Activated CD4-positive, alpha-beta T cell treated with anti-CD3 and anti-CD28 coated beads, Interleukin-2, amount 10 ng/mL, durations not matched to agents 24 days and 14 days (primary cell): ENCODE measurements at regions of chr2 and their contacts with region 1.

Region 1: GRCh38 chr2:160406591-160407392 is 86.8 kb downstream of the RBMS1 start:
- DNase-seq: peak; percentile 92
- H3K4me3 Mint-ChIP-seq: peak overlapping the region; percentile 98
- H3K27ac Mint-ChIP-seq: peak overlapping the region; percentile 89
- H3K4me1 Mint-ChIP-seq: peaks cover 69% of the 10 kb centered on the region
- H3K27me3 Mint-ChIP-seq: peaks cover 4% of the 10 kb centered on the region

Region 2: GRCh38 chr2:160224060-160224459 is 182.7 kb before region 1 on chr2:
- intact Hi-C with region 1: loop called (anchors 5 kb)
- DNase-seq: peak; percentile 73
- H3K4me3 Mint-ChIP-seq: peak overlapping the region; percentile 31
- H3K27ac Mint-ChIP-seq: peak overlapping the region; percentile 67
- H3K4me1 Mint-ChIP-seq: peaks cover 44% of the 10 kb centered on the region
- H3K27me3 Mint-ChIP-seq: peaks cover 4% of the 10 kb centered on the region

Region 3: DNA sequence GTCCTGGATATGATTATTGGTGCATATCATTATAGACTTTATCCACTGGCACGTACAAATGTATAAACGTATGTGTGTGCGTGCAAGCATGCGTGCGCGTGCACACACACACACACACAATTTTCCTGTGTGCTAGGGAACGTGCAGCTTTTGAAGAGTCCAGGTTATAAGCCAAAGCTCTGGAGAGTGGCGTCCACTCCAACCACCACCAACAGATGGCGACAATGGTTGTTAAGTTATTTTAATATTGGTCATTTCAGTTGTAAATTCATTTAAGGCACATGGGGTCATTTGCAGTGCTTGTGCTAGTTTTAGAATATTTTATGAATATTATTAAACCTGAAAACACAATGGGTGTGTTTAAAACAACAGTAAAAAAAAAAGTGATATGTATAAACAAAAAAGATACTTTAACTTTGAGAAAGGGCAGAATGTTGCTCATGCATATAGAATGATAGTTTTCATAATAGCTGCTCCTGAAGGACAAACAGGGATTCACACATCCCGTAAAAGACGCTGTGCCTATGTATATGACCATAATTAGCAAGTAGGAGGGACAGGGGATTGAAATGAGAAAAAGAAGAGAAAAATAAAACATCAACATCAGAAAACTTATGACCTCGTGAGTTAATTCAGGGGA is 82.5 kb before region 1 on chr2:
- intact Hi-C with region 1: loop called (anchors 2 kb)
- DNase-seq: peak; percentile 79
- H3K4me3 Mint-ChIP-seq: no peak overlapping the region
- H3K27ac Mint-ChIP-seq: no peak overlapping the region
- H3K4me1 Mint-ChIP-seq: peaks cover 60% of the 10 kb centered on the region
- H3K27me3 Mint-ChIP-seq: no peaks in the 10 kb centered on the region

Region 4: DNA sequence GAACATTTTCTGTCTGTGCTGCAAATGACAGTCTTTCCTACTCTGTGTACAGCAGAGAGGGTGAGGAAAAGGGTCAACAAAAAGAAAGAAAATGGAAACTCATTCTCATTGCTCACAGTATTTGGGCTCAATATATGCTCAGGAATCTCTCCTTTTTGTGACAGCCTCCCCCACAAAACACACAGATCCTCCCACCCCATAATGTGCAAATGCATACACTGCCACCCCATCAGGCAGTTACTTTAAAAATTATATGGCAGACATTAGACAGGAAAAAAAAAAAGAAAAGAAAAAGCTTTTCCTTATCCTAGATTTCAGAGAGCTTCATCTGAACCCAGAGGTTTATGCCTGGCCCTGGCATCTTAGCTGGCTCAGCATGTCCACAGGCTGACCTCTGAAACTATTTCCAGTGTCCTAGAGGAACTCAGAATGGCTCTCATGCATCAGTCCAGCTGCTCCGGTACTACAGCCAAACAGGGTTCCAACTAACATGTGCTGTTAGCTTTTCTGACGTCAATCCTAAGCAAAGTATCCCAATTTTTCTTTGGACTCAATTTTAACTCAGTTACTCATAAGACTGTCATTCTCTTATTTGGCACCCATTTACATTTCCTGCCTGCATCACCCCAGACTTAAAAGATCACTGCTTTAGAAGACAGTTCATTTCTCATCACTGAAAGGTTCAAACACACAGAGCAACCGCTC is 19.1 kb before region 1 on chr2:
- intact Hi-C with region 1: loop called (anchors 2 kb)
- DNase-seq: no peak
- H3K4me3 Mint-ChIP-seq: peak overlapping the region; percentile 54
- H3K27ac Mint-ChIP-seq: peak overlapping the region; percentile 57
- H3K4me1 Mint-ChIP-seq: peaks cover 54% of the 10 kb centered on the region
- H3K27me3 Mint-ChIP-seq: no peaks in the 10 kb centered on the region

Region 5: GRCh38 chr2:160429248-160430000 is 22.6 kb after region 1 on chr2:
- intact Hi-C with region 1: loop called (anchors 1 kb)
- DNase-seq: no peak
- H3K4me3 Mint-ChIP-seq: no peak overlapping the region
- H3K27ac Mint-ChIP-seq: no peak overlapping the region
- H3K4me1 Mint-ChIP-seq: peaks cover 49% of the 10 kb centered on the region
- H3K27me3 Mint-ChIP-seq: no peaks in the 10 kb centered on the region

Region 6: GRCh38 chr2:160465406-160465805 is 58.6 kb after region 1 on chr2:
- intact Hi-C with region 1: no loop called
- DNase-seq: no peak
- H3K4me3 Mint-ChIP-seq: peak overlapping the region; percentile 1
- H3K27ac Mint-ChIP-seq: no peak overlapping the region
- H3K4me1 Mint-ChIP-seq: peaks cover 34% of the 10 kb centered on the region
- H3K27me3 Mint-ChIP-seq: no peaks in the 10 kb centered on the region

Region 7: GRCh38 chr2:160493227-160494028 is 86.6 kb after region 1 on chr2 and contains the start of gene RBMS1:
- intact Hi-C with region 1: loop called (anchors 2 kb)
- DNase-seq: peak; percentile 87
- H3K4me3 Mint-ChIP-seq: peak within 1 kb of the TSS; percentile 94
- H3K27ac Mint-ChIP-seq: peak within 1 kb of the TSS; percentile 90
- H3K4me1 Mint-ChIP-seq: peaks cover 30% of the 10 kb centered on the region
- H3K27me3 Mint-ChIP-seq: peaks cover 11% of the 10 kb centered on the region
- total RNA-seq, gene RBMS1: 34.0 and 35.2 TPM in 2 replicates

Region 8: DNA sequence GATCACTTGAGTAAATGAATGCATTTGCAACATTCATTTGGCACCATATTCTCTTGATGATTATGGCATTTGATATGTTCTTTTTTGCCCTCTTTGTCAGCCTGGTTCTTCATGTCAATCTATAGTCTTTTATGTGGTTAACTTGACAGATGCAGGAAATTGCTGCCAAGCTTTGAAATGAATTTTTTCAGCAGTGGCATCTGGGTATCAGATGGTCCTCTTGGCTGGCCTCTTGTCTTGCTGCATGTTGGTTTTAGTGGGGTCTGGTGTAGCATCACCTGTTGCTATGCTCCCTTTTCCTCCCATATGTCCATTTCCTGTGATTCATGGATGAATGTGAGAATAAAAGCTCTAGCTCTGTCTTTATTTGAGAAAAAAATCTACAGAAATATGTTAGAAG is 1547.3 kb after region 1 on chr2:
- intact Hi-C with region 1: loop called (anchors 5 kb)
- DNase-seq: peak; percentile 78
- H3K4me3 Mint-ChIP-seq: peak overlapping the region; percentile 50
- H3K27ac Mint-ChIP-seq: peak overlapping the region; percentile 86
- H3K4me1 Mint-ChIP-seq: peaks cover 57% of the 10 kb centered on the region
- H3K27me3 Mint-ChIP-seq: no peaks in the 10 kb centered on the region